Left ventricle myocardium superior (tissue), 1 donor: ENCODE measurements at regions of chr10 and their contacts with region 1.

Region 1: GRCh38 chr10:96229568-96230030 is 41.8 kb downstream of the BLNK start:
- DNase-seq: peak; percentile 87
- ATAC-seq: peak; percentile 71

Region 2: GRCh38 chr10:96188916-96189315 is 40.7 kb before region 1 on chr10:
- intact Hi-C with region 1: no loop called
- DNase-seq: no peak
- ATAC-seq: no peak

Region 3: GRCh38 chr10:96287392-96288105 is 58.0 kb after region 1 on chr10:
- intact Hi-C with region 1: loop called (anchors 5 kb)
- DNase-seq: no peak
- ATAC-seq: no peak